HEK293T (cell line): ENCODE measurements at regions of chr2 and their contacts with region 1.

Region 1: GRCh38 chr2:132547074-132547687 is 122.8 kb downstream of the LYPD1 start:
- DNase-seq: peak; percentile 59

Region 2: DNA sequence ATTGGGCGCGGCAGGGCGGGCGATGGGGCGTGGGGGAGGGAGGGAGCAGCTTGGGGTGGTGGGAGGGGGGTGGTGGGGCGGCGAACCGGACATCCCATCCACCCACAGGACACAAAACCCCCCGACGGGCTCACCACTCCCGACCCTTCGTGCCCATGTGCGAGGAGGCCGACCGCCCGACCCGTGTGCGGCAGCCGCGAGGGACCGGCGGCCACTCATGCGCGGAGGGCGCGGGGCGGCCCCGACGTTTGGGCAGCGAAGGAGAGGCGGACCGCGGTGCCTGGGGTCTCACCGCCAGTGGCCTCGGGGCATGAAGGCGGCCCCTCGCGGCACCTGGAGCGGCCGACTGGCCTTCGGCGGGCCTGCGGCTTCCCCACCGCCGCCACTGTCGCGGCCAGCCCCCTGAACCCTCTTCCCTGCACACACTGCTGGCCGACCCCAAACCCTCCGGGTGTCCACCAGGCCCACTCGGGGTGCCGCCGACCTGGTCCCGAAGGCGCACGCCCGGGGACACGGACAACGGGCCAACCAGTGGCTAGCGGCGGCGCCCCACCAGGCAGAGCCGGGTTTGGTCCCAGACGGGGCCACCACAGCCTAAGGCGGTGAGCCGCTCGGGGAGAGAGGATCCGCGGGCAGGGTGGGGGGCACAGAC is 290.8 kb before region 1 on chr2:
- CTCF ChIA-PET with region 1: no interaction called
- POLR2A ChIA-PET with region 1: no interaction called
- DNase-seq: no peak

Region 3: GRCh38 chr2:133171393-133172004 is 624.3 kb after region 1 on chr2:
- CTCF ChIA-PET with region 1: interaction called, 11 read pairs
- POLR2A ChIA-PET with region 1: no interaction called
- DNase-seq: peak; percentile 27